CD4-positive, alpha-beta memory T cell (primary cell): ENCODE measurements at regions of chr19 and their contacts with region 1.

Region 1: DNA sequence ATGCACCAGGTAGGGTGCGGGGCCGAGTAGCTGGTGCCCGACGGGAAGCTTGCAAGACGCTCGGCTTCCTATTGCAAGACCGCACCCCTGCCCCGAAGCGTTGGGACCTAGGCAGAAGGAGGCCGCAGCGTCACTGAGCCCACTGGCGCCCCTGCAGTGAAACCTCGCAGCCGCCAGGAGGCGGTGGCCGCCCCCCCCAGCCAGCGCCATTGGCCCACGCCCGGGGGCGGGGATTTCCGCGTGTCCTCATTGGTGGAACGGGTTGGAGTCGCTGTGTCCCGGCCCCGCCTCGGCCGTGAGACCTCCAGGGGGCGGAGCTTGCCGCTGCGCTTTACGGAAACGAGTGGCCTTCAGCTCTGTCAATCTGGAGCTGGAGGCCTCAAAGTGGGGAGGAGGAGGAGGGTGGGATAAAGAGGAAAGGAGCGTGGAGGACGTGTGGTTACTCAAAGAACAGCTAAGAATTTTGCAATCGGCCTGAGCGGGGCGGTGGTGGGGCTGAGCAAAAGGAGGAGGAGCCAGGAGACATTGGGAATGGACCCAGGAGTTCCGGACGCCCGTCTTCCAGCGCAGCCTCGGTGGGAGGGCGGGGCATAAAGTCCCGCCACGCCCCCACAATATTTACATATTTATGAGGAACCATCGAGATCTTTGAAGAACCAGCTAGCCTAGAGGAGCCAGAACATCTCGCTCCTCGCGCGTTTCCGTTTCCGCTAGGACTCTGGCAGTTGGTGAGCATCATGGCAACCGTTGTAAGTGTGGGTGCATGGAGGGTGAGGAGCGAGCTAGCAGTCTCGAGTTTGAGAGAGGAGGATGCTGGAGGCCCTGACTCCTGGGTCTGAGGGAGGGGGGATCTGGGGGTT is at the starts of genes GYS1 and RUVBL2:
- DNase-seq: peak; percentile 99 to 100 (median 99)
- H3K4me3 ChIP-seq: peak within 1 kb of the TSS; percentile 91 to 98
- H3K4me3 Mint-ChIP-seq: peak within 1 kb of the TSS; percentile 90 to 98 (median 96)
- H3K27ac ChIP-seq: peak within 1 kb of the TSS; percentile 82
- H3K27ac Mint-ChIP-seq: peak within 1 kb of the TSS; percentile 84 to 99 (median 98)
- H3K4me1 ChIP-seq: peaks cover 30% of the 10 kb centered on the region
- H3K4me1 Mint-ChIP-seq: peaks cover 23 to 56% (median 31%) of the 10 kb centered on the region in 4 donors
- H3K27me3 ChIP-seq: no peaks in the 10 kb centered on the region
- H3K27me3 Mint-ChIP-seq: no peaks in the 10 kb centered on the region
- total RNA-seq, gene GYS1: 56.2 to 56.4 TPM
- total RNA-seq, gene RUVBL2: 27.9 to 28.5 TPM

Region 2: GRCh38 chr19:48746738-48747575 is 246.4 kb before region 1 on chr19 and contains the start of gene IZUMO1:
- CTCF ChIA-PET with region 1: no interaction called
- POLR2A ChIA-PET with region 1: no interaction called
- intact Hi-C with region 1: no loop called
- DNase-seq: peak; percentile 46 to 70 (median 55)
- H3K4me3 ChIP-seq: peak within 1 kb of the TSS in 1 of 2 donors; percentile 23
- H3K4me3 Mint-ChIP-seq: peak within 1 kb of the TSS in 3 of 8 donors; percentile 6 to 39 (median 35)
- H3K27ac ChIP-seq: no peak within 1 kb of the TSS
- H3K27ac Mint-ChIP-seq: peak within 1 kb of the TSS in 3 of 7 donors; percentile 1 to 60 (median 21)
- H3K4me1 ChIP-seq: peaks cover 12% of the 10 kb centered on the region
- H3K4me1 Mint-ChIP-seq: peaks cover 4 to 24% (median 12%) of the 10 kb centered on the region in 4 donors
- H3K27me3 ChIP-seq: peaks cover 5% of the 10 kb centered on the region
- H3K27me3 Mint-ChIP-seq: peaks cover 0 to 4% of the 10 kb centered on the region in 2 donors
- total RNA-seq, gene IZUMO1: not detected

Region 3: GRCh38 chr19:48795055-48795684 is 198.2 kb before region 1 on chr19:
- CTCF ChIA-PET with region 1: interaction called, 10 read pairs
- POLR2A ChIA-PET with region 1: no interaction called
- intact Hi-C with region 1: loop called (anchors 1 kb)
- DNase-seq: peak; percentile 86 to 87 (median 86)
- H3K4me3 ChIP-seq: peak overlapping the region; percentile 48 to 78
- H3K4me3 Mint-ChIP-seq: peak overlapping the region; percentile 94 to 98 (median 95)
- H3K27ac ChIP-seq: peak overlapping the region; percentile 70
- H3K27ac Mint-ChIP-seq: peak overlapping the region; percentile 64 to 97 (median 96)
- H3K4me1 ChIP-seq: peaks cover 5% of the 10 kb centered on the region
- H3K4me1 Mint-ChIP-seq: peaks cover 4 to 16% (median 6%) of the 10 kb centered on the region in 4 donors
- H3K27me3 ChIP-seq: no peaks in the 10 kb centered on the region
- H3K27me3 Mint-ChIP-seq: no peaks in the 10 kb centered on the region

Region 4: GRCh38 chr19:48954595-48955310 is 38.7 kb before region 1 on chr19 and contains the start of gene BAX:
- CTCF ChIA-PET with region 1: interaction called, 11 read pairs
- POLR2A ChIA-PET with region 1: interaction called, 13 read pairs
- intact Hi-C with region 1: no loop called
- DNase-seq: peak; percentile 69 to 81 (median 74)
- H3K4me3 ChIP-seq: peak within 1 kb of the TSS; percentile 76 to 87
- H3K4me3 Mint-ChIP-seq: peak within 1 kb of the TSS; percentile 79 to 94 (median 90)
- H3K27ac ChIP-seq: peak within 1 kb of the TSS; percentile 86
- H3K27ac Mint-ChIP-seq: peak within 1 kb of the TSS; percentile 77 to 92 (median 86)
- H3K4me1 ChIP-seq: peaks cover 23% of the 10 kb centered on the region
- H3K4me1 Mint-ChIP-seq: peaks cover 12 to 34% (median 27%) of the 10 kb centered on the region in 4 donors
- H3K27me3 ChIP-seq: no peaks in the 10 kb centered on the region
- H3K27me3 Mint-ChIP-seq: no peaks in the 10 kb centered on the region
- total RNA-seq, gene BAX: 173 to 183 TPM

Region 5: GRCh38 chr19:48975947-48976847 is 17.2 kb before region 1 on chr19:
- CTCF ChIA-PET with region 1: interaction called, 19 read pairs
- POLR2A ChIA-PET with region 1: interaction called, 12 read pairs
- intact Hi-C with region 1: no loop called
- DNase-seq: peak in 4 of 5 donors; percentile 42 to 54 (median 46)
- H3K4me3 ChIP-seq: no peak overlapping the region
- H3K4me3 Mint-ChIP-seq: no peak overlapping the region
- H3K27ac ChIP-seq: no peak overlapping the region
- H3K27ac Mint-ChIP-seq: peak overlapping the region in 3 of 7 donors; percentile 35 to 44 (median 41)
- H3K4me1 ChIP-seq: no peaks in the 10 kb centered on the region
- H3K4me1 Mint-ChIP-seq: peaks cover under 1 to 6% (median 2%) of the 10 kb centered on the region in 4 donors
- H3K27me3 ChIP-seq: no peaks in the 10 kb centered on the region
- H3K27me3 Mint-ChIP-seq: no peaks in the 10 kb centered on the region

Region 6: DNA sequence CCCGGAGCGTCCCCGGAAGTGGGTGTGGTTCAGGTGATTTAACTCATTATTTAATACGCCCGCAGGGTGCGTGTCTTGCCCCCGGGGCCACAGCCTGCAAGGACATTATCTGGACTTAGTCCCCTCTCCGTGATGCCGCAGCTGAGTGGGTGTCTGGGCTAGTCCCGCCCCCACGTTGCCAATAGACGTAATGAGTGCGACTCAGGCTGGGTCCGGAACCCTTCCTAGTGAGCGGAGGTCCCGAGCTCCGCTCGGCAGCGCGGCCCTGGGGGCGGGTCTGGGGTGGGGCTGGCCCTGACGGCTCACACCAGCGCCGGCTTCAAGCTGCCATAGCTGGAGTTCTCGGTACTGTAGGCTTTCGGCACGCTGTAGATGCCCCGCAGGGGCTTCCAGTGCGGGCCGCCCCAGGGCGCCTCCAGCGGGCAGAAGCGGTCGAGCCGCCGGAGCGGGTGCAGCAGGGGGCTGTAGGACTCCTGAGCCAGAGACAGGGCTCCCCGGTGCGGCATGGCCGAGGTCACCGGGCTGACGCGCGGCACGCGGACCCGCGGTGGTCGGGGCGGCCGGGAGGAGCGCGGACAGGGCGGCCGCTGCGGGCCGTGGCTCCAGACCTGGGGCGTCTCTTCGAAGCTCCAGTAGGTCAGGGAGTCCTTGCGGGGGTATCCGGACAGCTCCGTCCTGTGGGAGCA is 24.4 kb after region 1 on chr19:
- CTCF ChIA-PET with region 1: interaction called, 22 read pairs
- POLR2A ChIA-PET with region 1: interaction called, 33 read pairs
- intact Hi-C with region 1: loop called (anchors 1 kb)
- DNase-seq: peak; percentile 62 to 76 (median 69)
- H3K4me3 ChIP-seq: peak overlapping the region in 1 of 2 donors; percentile 73
- H3K4me3 Mint-ChIP-seq: peak overlapping the region; percentile 84 to 94 (median 90)
- H3K27ac ChIP-seq: peak overlapping the region; percentile 23
- H3K27ac Mint-ChIP-seq: peak overlapping the region in 4 of 7 donors; percentile 13 to 55 (median 36)
- H3K4me1 ChIP-seq: peaks cover 24% of the 10 kb centered on the region
- H3K4me1 Mint-ChIP-seq: peaks cover 15 to 39% (median 25%) of the 10 kb centered on the region in 4 donors
- H3K27me3 ChIP-seq: no peaks in the 10 kb centered on the region
- H3K27me3 Mint-ChIP-seq: peaks cover 0 to 3% of the 10 kb centered on the region in 2 donors

Region 7: GRCh38 chr19:49106648-49107135 is 113.3 kb after region 1 on chr19:
- CTCF ChIA-PET with region 1: interaction called, 11 read pairs
- POLR2A ChIA-PET with region 1: no interaction called
- intact Hi-C with region 1: no loop called
- DNase-seq: peak; percentile 55 to 59 (median 57)
- H3K4me3 ChIP-seq: no peak overlapping the region
- H3K4me3 Mint-ChIP-seq: peak overlapping the region in 1 of 8 donors; percentile 4
- H3K27ac ChIP-seq: no peak overlapping the region
- H3K27ac Mint-ChIP-seq: peak overlapping the region in 3 of 7 donors; percentile 15 to 74 (median 64)
- H3K4me1 ChIP-seq: no peaks in the 10 kb centered on the region
- H3K4me1 Mint-ChIP-seq: peaks cover 0 to 11% (median 3%) of the 10 kb centered on the region in 4 donors
- H3K27me3 ChIP-seq: no peaks in the 10 kb centered on the region
- H3K27me3 Mint-ChIP-seq: no peaks in the 10 kb centered on the region

Region 8: GRCh38 chr19:49640113-49640898 is 646.9 kb after region 1 on chr19 and contains the start of gene RRAS:
- CTCF ChIA-PET with region 1: no interaction called
- POLR2A ChIA-PET with region 1: interaction called, 3 read pairs
- intact Hi-C with region 1: loop called (anchors 2 kb)
- DNase-seq: peak; percentile 99 to 100 (median 100)
- H3K4me3 ChIP-seq: peak within 1 kb of the TSS; percentile 42 to 73
- H3K4me3 Mint-ChIP-seq: peak within 1 kb of the TSS; percentile 89 to 95 (median 92)
- H3K27ac ChIP-seq: peak within 1 kb of the TSS; percentile 97
- H3K27ac Mint-ChIP-seq: peak within 1 kb of the TSS; percentile 96 to 100 (median 99)
- H3K4me1 ChIP-seq: peaks cover 63% of the 10 kb centered on the region
- H3K4me1 Mint-ChIP-seq: peaks cover 44 to 73% (median 56%) of the 10 kb centered on the region in 4 donors
- H3K27me3 ChIP-seq: no peaks in the 10 kb centered on the region
- H3K27me3 Mint-ChIP-seq: no peaks in the 10 kb centered on the region
- total RNA-seq, gene RRAS: 12.0 to 13.4 TPM